ENCODE measurements at regions of chr10 and their contacts with region 1.

Region 1: DNA sequence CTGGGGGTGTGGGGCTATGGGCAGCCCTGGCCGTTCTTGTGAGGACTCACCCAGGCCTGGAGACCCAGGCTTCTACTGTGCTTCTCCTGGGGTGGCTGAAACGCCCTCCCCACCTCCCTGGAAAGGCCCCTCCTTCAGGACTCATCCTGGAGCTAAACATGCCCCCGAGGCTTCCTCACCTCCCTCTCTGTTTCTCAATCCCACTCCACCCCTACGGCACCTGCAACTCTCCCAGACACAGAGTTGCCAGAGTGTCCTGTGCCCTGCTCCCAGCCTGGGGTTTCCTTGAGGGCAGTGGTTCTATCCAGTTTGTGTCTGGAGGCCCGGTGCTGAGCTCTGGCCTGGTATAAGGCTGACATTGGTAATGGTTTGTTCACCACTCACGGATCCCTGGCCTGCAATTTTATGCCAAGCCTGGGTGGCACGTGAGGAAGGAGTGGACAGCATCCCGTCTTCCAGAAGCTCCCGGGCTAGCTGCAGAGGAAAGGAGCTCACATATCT is 68.0 kb downstream of the GRID1 start:
- DNase-seq: peak; percentile 25
- ATAC-seq: no peak

Region 2: GRCh38 chr10:85510682-85511081 is 787.9 kb before region 1 on chr10:
- intact Hi-C with region 1: no loop called
- DNase-seq: no peak
- ATAC-seq: no peak

Region 3: GRCh38 chr10:86319676-86320075 is 21.1 kb after region 1 on chr10:
- intact Hi-C with region 1: loop called (anchors 1 kb)
- DNase-seq: no peak
- ATAC-seq: no peak

Region 4: GRCh38 chr10:86345296-86346168 is 47.0 kb after region 1 on chr10:
- intact Hi-C with region 1: no loop called
- DNase-seq: peak; percentile 25
- ATAC-seq: no peak